ENCODE measurements at regions of chr19 and their contacts with region 1.

Region 1: GRCh38 chr19:47243776-47244547 is 12.4 kb upstream of the CCDC9 start:
- DNase-seq: peak; percentile 100
- H3K4me3 ChIP-seq: no peak overlapping the region
- H3K27ac ChIP-seq: peak overlapping the region; percentile 49
- H3K4me1 ChIP-seq: peaks cover 20% of the 10 kb centered on the region
- H3K27me3 ChIP-seq: no peaks in the 10 kb centered on the region
- CTCF ChIP-seq: peak; percentile 95 to 99
- POLR2A ChIP-seq: peak; percentile 53

Region 2: DNA sequence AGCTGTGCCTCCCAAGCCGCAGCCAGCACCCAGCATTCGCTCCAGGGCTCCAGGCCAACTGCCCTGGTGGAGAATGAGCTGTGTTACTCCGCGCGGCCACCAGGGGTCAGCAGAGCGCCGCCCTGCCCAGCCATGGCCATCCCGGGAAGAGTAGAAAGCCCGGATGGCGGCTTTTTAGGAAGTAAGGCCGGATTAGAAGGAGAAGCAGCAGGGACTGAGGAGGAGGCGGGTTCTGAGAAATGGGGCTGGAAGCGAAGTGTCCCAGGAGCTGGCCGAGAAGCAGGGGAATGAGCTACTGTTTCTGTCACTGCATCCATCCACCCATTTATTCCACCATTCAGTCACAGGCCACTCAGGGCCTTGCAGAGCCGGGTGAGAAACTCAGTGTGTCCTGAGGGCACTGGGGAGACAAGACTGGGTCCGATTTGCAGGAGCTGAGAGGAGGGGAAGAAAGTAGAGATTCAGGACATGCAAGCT is 230.9 kb before region 1 on chr19:
- CTCF ChIA-PET with region 1: interaction called, 19 read pairs
- POLR2A ChIA-PET with region 1: no interaction called
- dilution Hi-C with region 1: no loop called
- intact Hi-C with region 1: loop called (anchors 1 kb)
- DNase-seq: peak; percentile 66
- H3K4me3 ChIP-seq: no peak overlapping the region
- H3K27ac ChIP-seq: no peak overlapping the region
- H3K4me1 ChIP-seq: no peaks in the 10 kb centered on the region
- H3K27me3 ChIP-seq: no peaks in the 10 kb centered on the region
- CTCF ChIP-seq: peak; percentile 98 to 99
- POLR2A ChIP-seq: no peak

Region 3: GRCh38 chr19:47130591-47131227 is 113.3 kb before region 1 on chr19 and contains the start of gene SAE1:
- CTCF ChIA-PET with region 1: interaction called, 26 read pairs
- POLR2A ChIA-PET with region 1: no interaction called
- dilution Hi-C with region 1: no loop called
- intact Hi-C with region 1: no loop called
- DNase-seq: peak; percentile 99
- H3K4me3 ChIP-seq: peak within 1 kb of the TSS; percentile 76 to 93 (median 82)
- H3K27ac ChIP-seq: peak within 1 kb of the TSS; percentile 78
- H3K4me1 ChIP-seq: peaks cover 30% of the 10 kb centered on the region
- H3K27me3 ChIP-seq: no peaks in the 10 kb centered on the region
- CTCF ChIP-seq: peak; percentile 39 to 64
- POLR2A ChIP-seq: peak; percentile 75
- total RNA-seq, gene SAE1: 219 and 223 TPM in 2 replicates

Region 4: GRCh38 chr19:47157431-47158321 is 86.3 kb before region 1 on chr19:
- CTCF ChIA-PET with region 1: interaction called, 69 read pairs
- POLR2A ChIA-PET with region 1: interaction called, 6 read pairs
- dilution Hi-C with region 1: no loop called
- intact Hi-C with region 1: loop called (anchors 1 kb)
- DNase-seq: peak; percentile 90
- H3K4me3 ChIP-seq: no peak overlapping the region
- H3K27ac ChIP-seq: peak overlapping the region; percentile 95
- H3K4me1 ChIP-seq: peaks cover 33% of the 10 kb centered on the region
- H3K27me3 ChIP-seq: no peaks in the 10 kb centered on the region
- CTCF ChIP-seq: peak in 1 of 2 donors; percentile 11
- POLR2A ChIP-seq: no peak

Region 5: GRCh38 chr19:47197141-47197540 is 46.8 kb before region 1 on chr19:
- CTCF ChIA-PET with region 1: interaction called, 15 read pairs
- POLR2A ChIA-PET with region 1: no interaction called
- dilution Hi-C with region 1: no loop called
- intact Hi-C with region 1: no loop called
- DNase-seq: no peak
- H3K4me3 ChIP-seq: no peak overlapping the region
- H3K27ac ChIP-seq: no peak overlapping the region
- H3K4me1 ChIP-seq: peaks cover 4% of the 10 kb centered on the region
- H3K27me3 ChIP-seq: no peaks in the 10 kb centered on the region
- CTCF ChIP-seq: no peak
- POLR2A ChIP-seq: no peak

Region 6: GRCh38 chr19:47231215-47231984 is 12.6 kb before region 1 on chr19:
- CTCF ChIA-PET with region 1: interaction called, 74 read pairs
- POLR2A ChIA-PET with region 1: interaction called, 27 read pairs
- dilution Hi-C with region 1: no loop called
- intact Hi-C with region 1: loop called (anchors 1 kb)
- DNase-seq: peak; percentile 91
- H3K4me3 ChIP-seq: peak overlapping the region in 2 of 3 experiments; percentile 14 to 38
- H3K27ac ChIP-seq: peak overlapping the region; percentile 56
- H3K4me1 ChIP-seq: peaks cover 31% of the 10 kb centered on the region
- H3K27me3 ChIP-seq: no peaks in the 10 kb centered on the region
- CTCF ChIP-seq: no peak
- POLR2A ChIP-seq: peak; percentile 64

Measured in endothelial cell of umbilical vein (primary cell).